Right ventricle myocardium superior (tissue), 1 donor: ENCODE measurements at regions of chr9 and their contacts with region 1.

Region 1: DNA sequence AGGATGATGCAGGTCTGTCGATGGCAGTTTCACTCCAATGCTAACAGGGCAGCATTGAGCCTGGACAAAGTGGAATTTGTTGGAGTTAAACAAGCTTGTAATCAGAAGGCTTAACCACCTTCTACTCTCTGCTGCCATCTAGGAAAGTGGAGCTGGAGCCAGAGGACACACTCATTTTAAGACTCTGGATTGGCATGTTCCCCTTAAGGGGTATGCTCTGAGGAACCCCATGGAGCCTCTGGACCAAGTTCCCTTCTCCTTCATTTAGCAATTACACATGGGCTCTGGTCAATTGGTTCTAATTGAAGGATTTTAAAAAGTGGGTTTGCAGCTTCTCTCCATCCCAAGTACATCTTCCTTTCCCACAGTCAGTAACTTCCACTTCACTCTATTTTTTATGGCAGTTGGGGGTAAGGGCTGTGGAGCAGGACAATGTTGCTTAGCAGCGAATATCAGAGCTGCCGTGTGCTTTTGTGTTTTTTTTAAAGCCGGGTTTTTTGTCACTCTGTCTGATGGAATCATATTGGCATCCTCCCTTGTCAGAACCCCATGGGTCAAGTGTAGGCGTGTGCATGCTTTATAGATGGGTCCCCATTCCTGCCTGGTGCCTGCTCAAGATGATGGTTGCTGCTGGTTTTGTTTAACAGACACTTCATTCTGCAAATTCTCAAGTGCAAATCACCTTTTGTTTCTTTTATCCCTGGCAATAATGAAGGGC is 330.8 kb upstream of the ADAMTSL1 start:
- DNase-seq: no peak
- ATAC-seq: no peak

Region 2: DNA sequence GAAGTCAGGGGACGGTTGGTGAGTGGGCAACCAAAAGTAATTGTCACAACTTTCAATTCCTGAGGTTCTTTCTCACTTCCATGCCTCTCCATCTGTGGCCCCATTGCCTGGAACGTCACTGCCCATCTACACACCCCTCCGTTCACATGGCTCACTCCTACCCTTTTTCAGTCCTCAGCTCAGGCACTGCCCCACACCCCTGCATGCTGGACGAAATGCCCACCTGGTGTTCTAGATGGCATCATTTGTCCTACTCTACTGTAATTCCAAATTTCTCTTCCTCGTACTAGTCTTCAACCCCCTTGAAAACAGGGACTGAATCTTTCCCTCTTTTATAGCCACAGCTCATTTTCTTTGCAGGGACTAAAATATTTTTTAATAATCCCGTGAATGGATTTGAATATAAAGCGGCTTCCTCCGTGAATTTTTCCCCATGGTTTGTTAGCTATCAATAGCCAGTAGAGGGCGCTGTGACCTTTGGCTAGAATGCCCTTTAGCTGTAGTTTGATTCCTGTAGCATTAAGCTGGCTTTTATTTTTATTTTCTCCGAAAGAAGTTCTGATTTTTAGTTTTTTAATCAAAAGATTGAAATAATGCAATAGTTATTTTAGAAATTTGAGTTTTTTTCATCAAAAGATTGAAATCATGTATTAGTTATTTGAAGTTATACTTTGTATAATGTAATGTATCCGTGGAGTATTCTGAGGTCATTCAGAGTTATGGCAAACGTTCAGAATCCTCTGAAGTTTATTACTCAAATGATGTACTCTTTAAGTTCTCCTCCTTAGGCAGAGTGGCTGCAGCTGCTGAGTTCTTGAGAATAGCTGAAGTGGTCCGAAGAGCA is 332.2 kb before region 1 on chr9:
- intact Hi-C with region 1: loop called (anchors 5 kb)
- DNase-seq: no peak
- ATAC-seq: no peak

Region 3: GRCh38 chr9:18189871-18190670 is 46.9 kb after region 1 on chr9:
- intact Hi-C with region 1: no loop called
- DNase-seq: no peak
- ATAC-seq: no peak

Region 4: GRCh38 chr9:18429070-18429469 is 285.9 kb after region 1 on chr9:
- intact Hi-C with region 1: no loop called
- DNase-seq: no peak
- ATAC-seq: no peak